GM12878 (cell line): ENCODE measurements at regions of chr4 and their contacts with region 1.

Region 1: DNA sequence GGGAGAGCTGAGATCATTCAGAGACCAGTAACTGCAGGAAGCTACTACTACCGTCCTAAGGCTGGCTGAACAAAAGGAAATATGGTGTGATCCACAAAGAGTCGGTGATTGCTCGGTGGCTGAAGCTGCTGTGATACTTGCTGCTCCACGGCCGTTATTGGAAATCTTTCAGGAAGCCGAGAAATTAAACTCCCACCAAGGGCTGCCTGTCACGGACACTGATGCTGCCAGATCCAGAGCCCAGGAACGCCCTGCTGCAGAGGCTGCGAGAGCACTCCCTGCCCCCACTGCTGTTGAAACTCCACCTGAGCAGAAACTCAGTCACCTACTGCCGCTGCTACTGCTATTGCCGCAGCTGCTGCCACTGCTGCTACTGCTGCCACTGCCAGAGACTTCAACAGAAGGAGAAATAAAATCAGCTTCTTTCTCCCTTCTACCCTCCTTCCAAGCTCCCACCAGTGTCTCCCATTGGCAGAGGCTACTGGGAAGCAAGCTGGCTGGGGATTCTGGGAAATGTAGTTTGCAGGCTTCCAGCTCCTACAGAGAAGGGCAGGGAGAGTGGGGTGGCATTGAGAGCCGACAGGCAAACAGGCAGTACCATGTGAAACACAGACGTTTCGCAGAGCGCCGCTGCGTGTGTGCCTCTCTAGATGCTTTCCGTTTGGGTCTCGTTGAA is 126.0 kb upstream of the ENPP6 start:
- DNase-seq: peak; percentile 69
- ATAC-seq: peak; percentile 51
- H3K4me3 ChIP-seq: peak overlapping the region; percentile 55
- H3K27ac ChIP-seq: peak overlapping the region; percentile 86
- H3K4me1 ChIP-seq: peaks cover 52% of the 10 kb centered on the region
- H3K27me3 ChIP-seq: no peaks in the 10 kb centered on the region
- CTCF ChIP-seq: no peak
- EP300 ChIP-seq: peak in 1 of 2 experiments; percentile 14; a peak in 1 of 4 replicates
- POLR2A ChIP-seq: peak; percentile 72
- RAD21 ChIP-seq: no peak

Region 2: DNA sequence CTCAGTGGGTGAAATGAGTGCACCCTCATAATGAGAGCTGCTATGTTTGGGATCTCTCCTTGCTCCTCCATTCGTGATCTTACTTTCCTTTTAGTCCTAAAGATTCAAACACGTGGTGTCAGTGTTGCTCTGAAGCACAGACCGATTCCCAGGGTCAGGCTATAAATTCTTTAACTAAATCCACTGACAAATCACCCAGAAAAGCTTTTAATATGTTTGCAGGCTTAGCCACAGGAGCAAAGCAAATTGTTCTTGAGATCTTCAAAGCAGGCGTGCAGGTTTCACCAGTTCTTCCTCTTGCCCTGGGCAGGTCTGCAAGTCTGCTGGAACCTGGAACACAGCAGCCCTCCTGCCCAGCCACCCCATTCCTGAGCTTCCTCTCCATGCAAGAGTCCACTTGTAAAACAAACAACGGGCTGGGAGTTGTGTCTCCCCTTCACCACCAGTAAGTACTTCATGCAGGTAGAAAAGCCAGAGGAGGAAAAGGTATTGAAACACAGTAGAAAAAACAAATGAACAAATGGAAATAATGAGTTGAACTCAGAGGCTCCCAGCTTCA is 55.9 kb before region 1 on chr4:
- CTCF ChIA-PET with region 1: interaction called, 40 read pairs
- POLR2A ChIA-PET with region 1: interaction called, 164 read pairs
- RAD21 ChIA-PET with region 1: interaction called, 193 read pairs
- SMC1A ChIA-PET with region 1: interaction called, 188 read pairs
- in situ Hi-C with region 1: loop called (anchors 5 kb)
- intact Hi-C with region 1: loop called (anchors 1 kb)
- DNase-seq: no peak
- ATAC-seq: peak; percentile 4; the same call in 1 of the 3 replicates
- H3K4me3 ChIP-seq: peak overlapping the region; percentile 55
- H3K27ac ChIP-seq: peak overlapping the region; percentile 99
- H3K4me1 ChIP-seq: peaks cover 64% of the 10 kb centered on the region
- H3K27me3 ChIP-seq: no peaks in the 10 kb centered on the region
- CTCF ChIP-seq: peak in 2 of 3 experiments; percentile 13 to 27; a peak in 3 of 6 replicates
- EP300 ChIP-seq: no peak
- POLR2A ChIP-seq: 0 out of 2 replicates have a peak, but pooled peaks have one; percentile 20
- RAD21 ChIP-seq: peak; percentile 53

Region 3: DNA sequence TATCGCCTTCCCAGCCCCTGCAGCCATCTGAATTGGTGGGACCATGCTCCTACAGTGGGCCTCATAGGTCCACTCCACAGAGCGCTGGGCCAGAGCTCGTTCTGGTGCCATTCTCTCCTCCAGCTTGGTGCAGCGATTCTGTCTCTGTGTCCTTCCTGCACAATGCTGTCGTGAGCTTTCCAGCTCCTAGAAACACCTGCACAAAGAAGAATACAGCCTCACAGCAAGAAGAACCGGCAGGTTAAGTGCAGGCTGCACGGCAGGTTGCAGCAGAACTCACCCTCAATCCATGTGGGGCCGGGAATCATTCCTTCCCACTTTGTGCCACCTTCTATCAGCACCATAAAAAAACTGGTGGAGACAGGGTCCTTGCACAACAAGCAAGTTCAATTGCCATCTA is 24.8 kb before region 1 on chr4:
- CTCF ChIA-PET with region 1: interaction called, 105 read pairs
- POLR2A ChIA-PET with region 1: interaction called, 445 read pairs
- RAD21 ChIA-PET with region 1: interaction called, 419 read pairs
- SMC1A ChIA-PET with region 1: interaction called, 411 read pairs
- in situ Hi-C with region 1: no loop called
- intact Hi-C with region 1: loop called (anchors 1 kb)
- DNase-seq: no peak
- ATAC-seq: peak; percentile 1
- H3K4me3 ChIP-seq: peak overlapping the region; percentile 20; the same call in 1 of the 2 replicates
- H3K27ac ChIP-seq: peak overlapping the region; percentile 92
- H3K4me1 ChIP-seq: peaks cover 52% of the 10 kb centered on the region
- H3K27me3 ChIP-seq: no peaks in the 10 kb centered on the region
- CTCF ChIP-seq: no peak
- EP300 ChIP-seq: no peak
- POLR2A ChIP-seq: no peak
- RAD21 ChIP-seq: no peak

Region 4: DNA sequence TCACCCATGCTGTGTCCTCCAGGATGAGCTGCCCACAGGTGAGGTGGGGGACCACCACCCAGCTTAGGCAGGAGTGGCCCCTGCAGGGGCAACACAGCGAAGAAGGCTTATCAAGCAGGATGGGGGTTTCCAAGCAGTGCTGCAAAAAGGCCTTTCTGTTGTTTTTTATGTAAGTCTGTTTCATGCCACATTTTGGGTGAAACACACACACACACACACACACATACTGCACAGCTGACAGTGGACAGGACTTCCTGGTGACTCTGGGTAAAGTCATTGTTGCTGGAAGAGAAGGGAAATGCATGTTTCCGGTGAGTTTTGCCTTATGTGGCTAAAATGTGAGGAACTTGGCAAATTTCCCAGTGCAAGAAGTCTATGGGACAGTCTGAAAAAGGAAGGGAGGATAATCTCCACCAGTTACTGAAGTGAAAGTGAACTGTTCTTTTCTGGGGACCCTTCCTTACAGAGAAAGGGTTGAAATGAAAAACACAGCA is 11.5 kb after region 1 on chr4:
- CTCF ChIA-PET with region 1: interaction called, 5 read pairs
- POLR2A ChIA-PET with region 1: interaction called, 11 read pairs
- RAD21 ChIA-PET with region 1: interaction called, 32 read pairs
- SMC1A ChIA-PET with region 1: interaction called, 22 read pairs
- in situ Hi-C with region 1: no loop called
- intact Hi-C with region 1: no loop called
- DNase-seq: peak; percentile 84
- ATAC-seq: peak; percentile 15
- H3K4me3 ChIP-seq: no peak overlapping the region
- H3K27ac ChIP-seq: peak overlapping the region; percentile 99
- H3K4me1 ChIP-seq: peaks cover 16% of the 10 kb centered on the region
- H3K27me3 ChIP-seq: no peaks in the 10 kb centered on the region
- CTCF ChIP-seq: no peak
- EP300 ChIP-seq: peak; percentile 52 to 63; a peak in 2 of 4 replicates
- POLR2A ChIP-seq: no peak
- RAD21 ChIP-seq: peak; percentile 28

Region 5: DNA sequence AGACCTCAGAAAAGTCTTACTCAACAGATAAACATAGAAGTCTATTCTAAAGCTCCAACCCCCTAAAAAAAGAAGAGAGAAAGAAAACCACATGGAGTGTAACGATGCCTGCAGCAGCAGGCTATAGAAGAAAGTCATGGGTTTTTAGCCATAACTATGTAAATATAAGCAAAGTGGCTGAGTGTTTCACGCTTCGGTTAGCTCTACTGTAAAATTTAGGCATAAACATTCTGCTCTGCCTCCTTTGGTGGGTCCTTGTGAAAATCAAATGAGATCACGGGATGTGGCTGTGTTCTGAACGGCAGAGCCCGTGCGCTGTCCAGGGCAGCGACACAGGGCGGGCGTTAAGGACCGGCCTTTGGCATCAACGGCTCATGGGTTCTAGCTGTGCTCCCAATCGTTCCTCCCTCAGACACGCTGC is 52.3 kb after region 1 on chr4:
- CTCF ChIA-PET with region 1: no interaction called
- POLR2A ChIA-PET with region 1: no interaction called
- RAD21 ChIA-PET with region 1: no interaction called
- SMC1A ChIA-PET with region 1: interaction called, 23 read pairs
- in situ Hi-C with region 1: no loop called
- intact Hi-C with region 1: no loop called
- DNase-seq: peak; percentile 81
- ATAC-seq: peak; percentile 89
- H3K4me3 ChIP-seq: peak overlapping the region; percentile 29
- H3K27ac ChIP-seq: peak overlapping the region; percentile 76
- H3K4me1 ChIP-seq: peaks cover 29% of the 10 kb centered on the region
- H3K27me3 ChIP-seq: no peaks in the 10 kb centered on the region
- CTCF ChIP-seq: no peak
- EP300 ChIP-seq: no peak
- POLR2A ChIP-seq: peak; percentile 63; the same call in 1 of the 2 replicates
- RAD21 ChIP-seq: no peak